ENCODE measurements at regions of chr9 and their contacts with region 1.

Region 1: DNA sequence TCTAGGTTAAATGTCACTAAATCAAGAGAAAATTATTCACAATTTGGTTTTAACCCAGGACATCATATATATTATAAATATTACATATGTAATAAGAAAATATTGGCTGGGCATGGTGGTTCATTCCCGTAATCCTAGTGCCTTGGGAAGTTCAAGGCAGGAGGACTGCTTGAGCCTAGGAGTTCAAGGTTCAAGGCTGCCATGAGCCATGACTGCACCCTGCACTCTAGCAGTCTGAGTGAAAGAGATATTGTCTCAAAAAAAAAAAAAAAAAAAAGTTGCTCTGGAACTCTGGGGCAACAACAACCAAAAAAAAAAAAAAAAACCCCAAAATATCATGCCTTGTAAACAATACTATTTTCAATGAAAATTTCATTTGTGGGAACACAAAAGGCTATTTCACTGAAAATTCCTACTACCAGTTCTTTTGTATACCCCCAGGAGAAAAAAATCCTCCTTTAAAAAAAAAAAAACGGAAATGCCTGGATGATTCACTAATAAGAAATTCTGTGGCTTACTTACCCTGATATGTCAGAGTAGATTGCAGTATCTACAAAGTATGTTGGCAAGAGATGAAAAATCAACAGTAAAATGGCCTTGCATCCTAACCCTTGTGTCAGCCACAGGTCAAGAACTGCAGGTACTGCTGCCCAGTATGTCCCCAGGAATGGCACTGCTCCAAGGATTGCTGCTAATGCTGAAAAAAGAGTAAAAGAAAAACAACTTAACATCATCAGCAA is 22.6 kb upstream of the CTNNAL1 start:
- DNase-seq: peak; percentile 83 to 99
- H3K4me3 ChIP-seq: no peak overlapping the region
- H3K27ac ChIP-seq: peak overlapping the region; percentile 67
- H3K4me1 ChIP-seq: peaks cover 69% of the 10 kb centered on the region
- H3K27me3 ChIP-seq: no peaks in the 10 kb centered on the region
- CTCF ChIP-seq: no peak

Region 2: DNA sequence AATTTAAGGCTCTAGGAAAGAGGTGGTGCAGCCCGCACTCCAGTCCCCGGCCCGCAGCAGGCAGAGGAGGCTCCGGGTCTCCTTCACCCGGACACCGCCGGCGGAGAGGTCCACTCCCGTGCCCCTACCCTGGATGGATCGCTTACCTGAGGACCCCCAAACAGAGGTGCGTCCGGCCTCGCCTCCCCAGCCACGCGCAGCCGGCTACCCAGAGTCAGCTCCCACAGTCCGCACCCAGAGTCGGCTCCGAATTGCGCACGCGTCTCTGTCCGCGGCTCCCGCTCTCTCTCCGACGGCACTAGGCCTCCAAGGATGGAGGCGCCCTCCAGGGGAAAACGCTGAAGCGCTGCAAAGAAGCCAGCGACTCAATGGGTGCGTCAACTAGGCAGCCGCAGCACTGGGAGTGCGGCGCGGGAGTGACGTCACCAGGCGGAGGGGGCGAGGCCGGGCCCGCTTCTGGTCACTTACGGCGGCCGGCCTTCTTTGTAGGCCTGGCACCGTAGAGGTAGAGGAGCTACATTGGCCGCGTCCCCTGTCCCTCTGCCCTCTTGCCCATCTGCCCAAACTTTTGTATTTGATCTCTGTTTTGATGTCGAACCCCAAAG is 102.0 kb before region 1 on chr9 and contains the start of gene ELP1:
- CTCF ChIA-PET with region 1: no interaction called
- POLR2A ChIA-PET with region 1: no interaction called
- intact Hi-C with region 1: loop called (anchors 1 kb)
- DNase-seq: peak; percentile 91 to 93
- H3K4me3 ChIP-seq: peak within 1 kb of the TSS; percentile 99
- H3K27ac ChIP-seq: peak within 1 kb of the TSS; percentile 80
- H3K4me1 ChIP-seq: peaks cover 20% of the 10 kb centered on the region
- H3K27me3 ChIP-seq: no peaks in the 10 kb centered on the region
- CTCF ChIP-seq: no peak
- total RNA-seq, gene ELP1: 29.6 and 35.1 TPM in 2 replicates

Region 3: DNA sequence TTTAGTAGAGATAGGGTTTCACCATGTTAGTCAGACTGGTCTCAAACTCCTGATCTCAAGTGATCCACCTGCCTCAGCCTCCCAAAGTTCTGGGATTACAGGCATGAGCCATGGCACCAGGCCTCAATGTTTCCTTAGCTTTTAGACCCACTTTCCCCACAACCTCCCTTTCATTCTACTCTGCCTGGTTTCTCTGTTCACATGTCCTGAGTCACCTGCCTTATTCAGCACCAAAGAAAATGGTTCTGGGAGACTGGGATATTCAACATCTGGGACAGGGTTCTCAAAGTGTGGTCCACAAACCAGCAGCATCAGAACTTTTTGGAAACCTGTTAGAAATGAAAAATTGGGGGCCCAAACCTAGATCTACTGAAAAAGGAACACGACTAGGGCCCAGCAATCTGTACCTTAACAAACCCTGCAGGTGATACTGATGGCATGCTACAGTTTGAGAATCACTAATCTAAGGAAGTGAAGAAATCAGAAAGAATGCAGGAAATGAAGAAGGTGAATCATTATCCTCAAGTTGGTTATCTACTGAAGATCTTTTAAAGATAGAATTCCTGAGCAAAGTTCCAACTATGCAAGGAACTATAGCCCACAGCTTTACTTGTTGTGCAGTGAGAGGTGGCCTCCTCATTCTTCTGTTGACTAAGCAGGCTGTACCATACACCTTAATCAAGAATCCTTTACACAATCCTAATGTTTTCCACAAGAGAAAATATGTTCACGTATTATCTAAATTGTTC is 29.3 kb after region 1 on chr9:
- CTCF ChIA-PET with region 1: no interaction called
- POLR2A ChIA-PET with region 1: no interaction called
- intact Hi-C with region 1: loop called (anchors 1 kb)
- DNase-seq: peak; percentile 35 to 98
- H3K4me3 ChIP-seq: no peak overlapping the region
- H3K27ac ChIP-seq: peak overlapping the region; percentile 94
- H3K4me1 ChIP-seq: peaks cover 58% of the 10 kb centered on the region
- H3K27me3 ChIP-seq: no peaks in the 10 kb centered on the region
- CTCF ChIP-seq: no peak